ENCODE measurements at regions of chr10 and their contacts with region 1.

Region 1: DNA sequence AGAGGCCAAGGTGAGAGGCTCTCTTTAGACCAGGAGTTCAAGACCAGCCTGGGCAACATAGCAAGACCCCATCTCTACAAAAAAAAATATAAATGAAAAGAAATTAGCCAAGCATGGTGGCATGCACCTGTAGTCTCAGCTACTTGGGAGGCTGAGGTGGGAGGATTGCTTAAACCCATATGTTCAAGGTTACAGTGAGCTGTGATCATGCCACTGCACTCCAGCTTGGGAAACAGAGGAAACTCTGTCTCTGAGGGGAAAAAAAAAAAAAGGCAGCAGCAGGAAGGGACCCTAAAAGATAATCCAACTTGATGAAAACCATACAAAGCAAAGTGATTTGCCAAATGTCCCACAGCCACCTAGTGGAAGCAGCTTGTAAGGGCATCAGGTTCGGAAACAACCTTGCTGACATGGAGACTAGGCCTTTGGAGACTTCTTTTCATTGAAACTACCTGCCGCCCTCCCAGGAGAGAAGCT is 15.6 kb upstream of the PBLD start:
- DNase-seq: no peak
- H3K4me3 ChIP-seq: no peak overlapping the region
- H3K27ac ChIP-seq: no peak overlapping the region
- H3K27me3 ChIP-seq: no peaks in the 10 kb centered on the region
- CTCF ChIP-seq: peak; percentile 82

Region 2: DNA sequence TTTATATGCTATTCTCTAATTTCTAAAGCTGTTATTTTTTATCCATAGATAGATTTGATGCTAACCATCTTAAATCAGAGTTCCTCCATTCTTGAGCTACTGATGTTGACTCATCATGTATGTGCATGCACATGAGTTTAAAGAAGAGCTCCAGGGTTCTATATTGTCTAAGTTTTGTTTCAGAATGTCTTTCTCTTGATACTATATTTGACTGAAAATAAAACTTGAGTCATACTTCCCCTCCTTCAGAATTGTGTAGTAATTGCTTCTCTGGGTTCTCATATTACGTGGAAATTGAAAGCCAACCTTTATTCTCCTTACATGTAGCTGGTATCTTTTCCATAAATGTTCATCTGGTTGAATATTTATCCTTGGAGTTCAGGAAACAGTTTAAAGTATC is 1333.1 kb before region 1 on chr10:
- CTCF ChIA-PET with region 1: no interaction called
- POLR2A ChIA-PET with region 1: no interaction called
- DNase-seq: no peak
- H3K4me3 ChIP-seq: no peak overlapping the region
- H3K27ac ChIP-seq: no peak overlapping the region
- H3K27me3 ChIP-seq: no peaks in the 10 kb centered on the region
- CTCF ChIP-seq: no peak

Region 3: DNA sequence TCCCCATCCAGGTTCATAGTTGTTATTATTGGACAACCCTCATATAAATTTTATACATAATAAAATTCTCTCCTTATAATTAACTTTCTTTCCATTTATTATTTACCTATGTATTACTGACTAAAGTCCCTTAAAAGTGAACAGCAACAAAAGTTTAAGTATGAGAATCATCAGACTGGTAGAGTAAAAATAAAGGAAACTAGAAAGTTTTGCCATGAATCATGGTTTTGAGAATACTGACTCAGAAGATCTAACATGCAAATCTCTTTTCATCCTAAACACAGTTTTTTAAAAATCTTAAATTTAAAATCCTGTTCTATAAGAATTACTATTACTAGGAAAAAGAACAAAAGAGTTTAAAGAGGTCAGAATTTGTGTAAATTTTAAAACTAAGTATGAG is 305.3 kb before region 1 on chr10:
- CTCF ChIA-PET with region 1: interaction called, 10 read pairs
- POLR2A ChIA-PET with region 1: no interaction called
- DNase-seq: no peak
- H3K4me3 ChIP-seq: no peak overlapping the region
- H3K27ac ChIP-seq: no peak overlapping the region
- H3K27me3 ChIP-seq: no peaks in the 10 kb centered on the region
- CTCF ChIP-seq: no peak

Region 4: GRCh38 chr10:68331455-68332258 is 16.6 kb before region 1 on chr10 and contains the start of gene HNRNPH3:
- CTCF ChIA-PET with region 1: interaction called, 16 read pairs
- POLR2A ChIA-PET with region 1: interaction called, 17 read pairs
- DNase-seq: peak; percentile 95
- H3K4me3 ChIP-seq: peak within 1 kb of the TSS; percentile 88
- H3K27ac ChIP-seq: peak within 1 kb of the TSS; percentile 94
- H3K27me3 ChIP-seq: no peaks in the 10 kb centered on the region
- CTCF ChIP-seq: no peak
- polyA plus RNA-seq, gene HNRNPH3: 87.8 and 113 TPM in 2 replicates

Region 5: DNA sequence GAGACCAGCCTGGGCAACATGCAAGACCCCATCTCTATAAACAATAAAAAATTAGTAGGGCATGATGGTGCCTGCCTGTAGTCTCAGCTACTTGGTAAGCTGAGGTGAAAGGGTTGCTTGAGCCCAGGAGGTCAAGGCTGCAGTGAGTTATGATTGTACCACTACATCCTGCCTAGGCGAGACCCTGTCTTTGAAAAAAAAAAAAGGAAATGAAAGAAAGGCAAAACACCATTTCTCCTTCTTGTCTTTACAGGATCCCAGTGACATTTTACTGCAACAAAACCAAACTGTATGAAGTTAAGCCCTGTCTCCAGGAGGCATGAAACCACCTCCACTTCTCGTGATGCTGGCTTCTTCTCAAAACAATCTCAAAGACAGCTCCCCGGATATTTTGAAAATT is 14.3 kb after region 1 on chr10:
- CTCF ChIA-PET with region 1: interaction called, 16 read pairs
- POLR2A ChIA-PET with region 1: interaction called, 3 read pairs
- DNase-seq: no peak
- H3K4me3 ChIP-seq: no peak overlapping the region
- H3K27ac ChIP-seq: no peak overlapping the region
- H3K27me3 ChIP-seq: no peaks in the 10 kb centered on the region
- CTCF ChIP-seq: no peak

Region 6: GRCh38 chr10:68371604-68372003 is 23.3 kb after region 1 on chr10:
- CTCF ChIA-PET with region 1: interaction called, 10 read pairs
- POLR2A ChIA-PET with region 1: interaction called, 3 read pairs
- DNase-seq: no peak
- H3K4me3 ChIP-seq: no peak overlapping the region
- H3K27ac ChIP-seq: no peak overlapping the region
- H3K27me3 ChIP-seq: no peaks in the 10 kb centered on the region
- CTCF ChIP-seq: no peak